Activated T-helper 1 cell treated with anti-CD3 and anti-CD28 coated beads, Interleukin-12 subunit alpha, Interleukin-12 subunit beta, Interleukin-2, Interleukin-4 antibody, amounts not matched to agents 30 ng/mL and 10 ng/mL and 1 ng/mL, durations not matched to agents 14 hours and 24 hours and 36 hours (primary cell): ENCODE measurements at regions of chr6 and their contacts with region 1.

Region 1: GRCh38 chr6:35146453-35146852 is 5.3 kb upstream of the TCP11 start:
- DNase-seq: no peak
- H3K4me3 Mint-ChIP-seq: no peak overlapping the region
- H3K27ac Mint-ChIP-seq: no peak overlapping the region
- H3K4me1 Mint-ChIP-seq: peaks cover 48% of the 10 kb centered on the region
- H3K27me3 Mint-ChIP-seq: peaks cover 5% of the 10 kb centered on the region

Region 2: GRCh38 chr6:35165630-35166071 is 19.2 kb after region 1 on chr6:
- intact Hi-C with region 1: loop called (anchors 1 kb)
- DNase-seq: no peak
- H3K4me3 Mint-ChIP-seq: no peak overlapping the region
- H3K27ac Mint-ChIP-seq: peak overlapping the region; percentile 80
- H3K4me1 Mint-ChIP-seq: peaks cover 14% of the 10 kb centered on the region
- H3K27me3 Mint-ChIP-seq: peaks cover 21% of the 10 kb centered on the region

Region 3: DNA sequence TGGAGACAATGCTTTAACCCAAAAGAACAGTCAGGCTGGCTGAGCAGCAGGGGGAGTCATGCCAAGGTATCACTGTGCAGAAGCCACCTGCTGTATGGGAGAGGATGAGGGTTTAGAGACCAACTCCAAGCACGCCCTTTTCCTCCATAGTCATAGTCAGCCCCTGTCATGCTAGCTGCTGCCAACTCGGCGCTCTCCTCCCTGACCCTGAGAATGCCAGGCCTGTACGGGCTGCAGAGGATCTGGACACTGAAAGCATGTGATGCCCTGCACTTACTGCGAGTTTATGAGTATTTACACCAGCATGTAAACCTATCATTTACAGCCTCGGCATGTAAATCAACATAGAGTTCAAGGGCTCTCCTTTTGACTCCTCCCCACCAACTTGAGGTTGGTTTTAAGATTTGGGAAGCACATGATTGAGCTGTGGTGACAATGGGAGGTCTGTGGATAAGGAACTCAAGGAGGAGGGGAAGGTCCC is 55.7 kb after region 1 on chr6:
- intact Hi-C with region 1: loop called (anchors 1 kb)
- DNase-seq: no peak
- H3K4me3 Mint-ChIP-seq: no peak overlapping the region
- H3K27ac Mint-ChIP-seq: no peak overlapping the region
- H3K4me1 Mint-ChIP-seq: no peaks in the 10 kb centered on the region
- H3K27me3 Mint-ChIP-seq: peaks cover 33% of the 10 kb centered on the region